Panc1 (cell line): ENCODE measurements at regions of chr6 and their contacts with region 1.

Region 1: DNA sequence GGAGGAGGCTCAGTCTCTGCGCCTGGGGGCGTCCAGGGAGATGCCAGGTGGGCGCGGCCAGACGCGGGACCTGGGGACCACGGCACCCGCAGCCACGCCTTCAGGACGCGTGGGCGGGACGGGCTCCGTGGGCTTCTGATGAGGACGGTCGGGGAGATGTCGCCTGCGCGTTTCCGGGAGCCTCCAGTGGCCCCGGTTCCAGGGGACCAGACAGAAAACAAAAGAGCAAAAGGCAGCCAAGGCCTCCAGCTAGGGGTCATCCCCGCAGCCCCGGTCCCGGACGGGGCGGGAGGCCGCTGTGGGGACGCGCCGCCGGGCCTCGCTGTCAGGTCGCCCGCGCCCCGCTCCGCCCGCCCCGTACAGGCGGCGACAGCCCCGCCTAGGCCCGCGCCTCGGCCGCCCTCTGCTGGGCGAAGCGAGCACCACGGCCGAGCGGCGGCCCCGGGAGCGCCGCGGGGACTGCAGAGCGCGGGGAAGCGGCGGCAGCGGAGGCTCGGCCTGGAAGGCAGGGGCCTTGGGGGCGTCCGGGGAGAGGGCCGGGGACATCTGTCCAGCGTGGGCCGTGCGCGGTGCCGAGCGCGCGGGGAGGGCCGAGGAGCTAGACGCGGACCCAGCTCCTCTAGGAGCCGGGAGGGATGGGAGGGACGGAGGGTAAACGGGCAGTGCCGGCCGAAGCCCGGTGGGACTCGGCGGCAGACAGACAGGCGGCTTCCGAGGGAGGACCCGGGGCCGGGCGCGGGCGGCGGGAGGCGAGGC is 48.7 kb downstream of the TMEM242 start:
- DNase-seq: no peak
- ATAC-seq: peak; percentile 98
- H3K4me3 ChIP-seq: peak overlapping the region; percentile 61 to 64
- H3K27ac ChIP-seq: peak overlapping the region; percentile 46
- H3K4me1 ChIP-seq: peaks cover 5% of the 10 kb centered on the region
- H3K27me3 ChIP-seq: no peaks in the 10 kb centered on the region
- CTCF ChIP-seq: peak; percentile 99

Region 2: GRCh38 chr6:156131221-156131903 is 1143.3 kb before region 1 on chr6:
- CTCF ChIA-PET with region 1: no interaction called
- POLR2A ChIA-PET with region 1: no interaction called
- in situ Hi-C with region 1: no loop called
- intact Hi-C with region 1: no loop called
- DNase-seq: no peak
- ATAC-seq: no peak
- H3K4me3 ChIP-seq: no peak overlapping the region
- H3K27ac ChIP-seq: no peak overlapping the region
- H3K4me1 ChIP-seq: no peaks in the 10 kb centered on the region
- H3K27me3 ChIP-seq: no peaks in the 10 kb centered on the region
- CTCF ChIP-seq: no peak

Region 3: GRCh38 chr6:157187182-157188083 is 87.2 kb before region 1 on chr6:
- CTCF ChIA-PET with region 1: no interaction called
- POLR2A ChIA-PET with region 1: no interaction called
- in situ Hi-C with region 1: no loop called
- intact Hi-C with region 1: no loop called
- DNase-seq: no peak
- ATAC-seq: no peak
- H3K4me3 ChIP-seq: no peak overlapping the region
- H3K27ac ChIP-seq: no peak overlapping the region
- H3K4me1 ChIP-seq: peaks cover 3% of the 10 kb centered on the region
- H3K27me3 ChIP-seq: no peaks in the 10 kb centered on the region
- CTCF ChIP-seq: no peak

Region 4: GRCh38 chr6:157227202-157228166 is 47.2 kb before region 1 on chr6:
- CTCF ChIA-PET with region 1: no interaction called
- POLR2A ChIA-PET with region 1: interaction called, 6 read pairs
- in situ Hi-C with region 1: no loop called
- intact Hi-C with region 1: loop called (anchors 5 kb)
- DNase-seq: no peak
- ATAC-seq: no peak
- H3K4me3 ChIP-seq: no peak overlapping the region
- H3K27ac ChIP-seq: no peak overlapping the region
- H3K4me1 ChIP-seq: no peaks in the 10 kb centered on the region
- H3K27me3 ChIP-seq: no peaks in the 10 kb centered on the region
- CTCF ChIP-seq: peak; percentile 68

Region 5: GRCh38 chr6:157443066-157443800 is 168.6 kb after region 1 on chr6:
- CTCF ChIA-PET with region 1: no interaction called
- POLR2A ChIA-PET with region 1: no interaction called
- in situ Hi-C with region 1: no loop called
- intact Hi-C with region 1: no loop called
- DNase-seq: no peak
- ATAC-seq: no peak
- H3K4me3 ChIP-seq: no peak overlapping the region
- H3K27ac ChIP-seq: no peak overlapping the region
- H3K4me1 ChIP-seq: no peaks in the 10 kb centered on the region
- H3K27me3 ChIP-seq: no peaks in the 10 kb centered on the region
- CTCF ChIP-seq: no peak